Ovary (tissue), 10 donors: ENCODE measurements at regions of chr9 and their contacts with region 1.

Region 1: DNA sequence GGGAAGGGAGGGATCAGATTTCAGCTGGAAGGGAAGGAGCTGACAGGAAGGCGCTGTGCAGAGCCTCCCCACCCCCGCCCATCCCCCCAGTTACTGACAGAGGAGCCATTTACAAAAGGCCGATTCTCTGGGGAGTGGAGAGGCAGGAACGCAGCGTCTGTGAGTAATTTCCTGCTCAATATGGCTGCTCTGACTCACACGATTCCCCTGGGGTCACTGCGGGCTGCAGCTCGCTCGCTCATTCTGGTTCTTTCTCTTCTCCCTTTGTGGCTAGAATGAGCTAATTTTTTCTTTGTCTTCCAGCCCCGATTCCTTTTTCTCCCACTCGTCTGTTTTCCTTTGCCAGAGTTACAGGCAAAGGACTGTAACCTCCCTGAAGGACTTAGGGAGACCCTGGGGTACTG is 28.8 kb downstream of the PTPA start:
- DNase-seq: peak; percentile 86 to 95 (median 91)
- H3K4me3 ChIP-seq: peak overlapping the region; percentile 29
- H3K27ac ChIP-seq: peak overlapping the region; percentile 97 to 98
- H3K4me1 ChIP-seq: peaks cover 46% of the 10 kb centered on the region
- H3K27me3 ChIP-seq: no peaks in the 10 kb centered on the region
- CTCF ChIP-seq: no peak
- EP300 ChIP-seq: peak; percentile 76
- POLR2A ChIP-seq: no peak

Region 2: DNA sequence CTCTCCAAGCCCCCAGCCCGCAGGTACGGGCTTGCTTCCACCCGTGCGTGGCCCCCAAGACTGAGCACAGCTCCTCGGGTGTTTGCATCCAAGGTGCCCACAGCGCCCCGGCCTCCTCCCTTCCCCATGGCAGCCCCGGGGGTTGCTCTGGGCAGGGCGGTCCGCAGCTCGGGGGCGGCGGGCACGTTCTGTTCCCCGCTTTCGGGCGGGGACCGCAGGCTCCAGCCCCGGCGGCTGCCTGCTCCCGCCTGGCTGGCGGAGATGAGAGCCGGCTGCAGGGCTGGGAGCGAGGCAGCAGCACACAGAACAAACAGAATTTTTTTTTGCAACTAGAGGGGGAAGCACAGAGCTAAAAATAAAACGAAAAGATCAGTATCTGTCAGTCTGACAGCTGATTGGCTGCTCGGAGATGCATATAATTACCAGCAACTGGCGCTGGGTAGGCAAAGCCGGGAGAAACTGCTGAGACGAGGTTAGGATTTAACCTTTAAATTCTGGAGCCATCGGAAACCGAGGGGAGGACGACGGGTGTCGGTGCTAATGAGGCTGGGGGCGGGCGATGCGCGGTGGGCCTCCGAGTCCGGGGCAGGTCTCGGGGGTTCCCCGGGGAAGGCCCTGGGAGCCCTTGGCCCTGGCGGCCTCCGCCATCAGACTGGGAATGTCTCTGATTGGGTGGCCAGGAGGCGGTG is 180.7 kb after region 1 on chr9:
- intact Hi-C with region 1: loop called in 1 of 4 experiments (anchors 10 kb)
- DNase-seq: peak; percentile 62 to 84 (median 64)
- H3K4me3 ChIP-seq: peak overlapping the region; percentile 34
- H3K27ac ChIP-seq: peak overlapping the region; percentile 88 to 94
- H3K4me1 ChIP-seq: peaks cover 35% of the 10 kb centered on the region
- H3K27me3 ChIP-seq: no peaks in the 10 kb centered on the region
- CTCF ChIP-seq: peak in 1 of 3 donors; percentile 26
- EP300 ChIP-seq: no peak
- POLR2A ChIP-seq: no peak

Region 3: DNA sequence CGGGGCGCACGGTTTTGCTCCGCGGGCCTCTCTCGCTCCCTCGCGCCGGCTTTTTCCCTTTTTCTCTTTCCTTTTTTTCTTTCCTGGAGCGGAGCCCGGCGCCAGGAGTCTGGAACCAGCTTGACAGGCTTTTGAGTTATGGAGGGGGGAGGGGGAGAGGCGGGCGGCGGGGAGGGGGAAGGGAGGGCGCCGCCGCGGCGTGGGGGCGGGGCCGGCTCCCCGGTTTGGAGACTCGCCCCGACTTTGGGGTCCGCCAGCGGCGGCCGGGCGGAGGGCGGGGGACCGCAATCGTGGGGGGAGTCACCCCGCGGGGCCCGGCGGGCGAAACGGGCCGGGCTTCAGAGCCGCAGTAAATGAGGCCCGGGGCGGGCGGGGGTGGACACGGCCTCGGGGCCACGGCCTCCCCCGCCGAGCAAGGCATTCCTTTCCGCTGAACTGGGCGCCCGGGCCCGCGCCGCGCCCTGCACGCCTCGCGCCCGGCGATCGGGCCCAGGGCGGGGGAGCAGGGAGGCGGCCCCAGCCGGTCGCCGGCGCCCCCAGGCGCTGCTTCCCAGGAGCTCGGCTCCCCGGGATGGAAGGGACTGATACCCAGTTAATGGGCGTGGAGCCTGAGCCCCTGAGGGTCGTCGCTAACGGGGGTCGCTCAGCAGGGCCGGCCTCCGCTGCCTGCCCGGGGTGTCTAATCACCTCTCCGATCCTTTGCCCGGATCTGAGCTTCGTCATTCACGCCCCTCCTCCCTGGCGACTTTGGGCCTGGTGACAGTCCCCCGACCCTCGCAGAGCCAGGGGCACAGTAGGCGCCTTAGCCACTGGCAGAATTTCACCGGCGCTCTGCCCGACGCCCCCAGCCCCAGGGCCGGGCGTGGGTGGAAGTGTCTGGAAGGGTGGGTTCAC is 342.8 kb after region 1 on chr9:
- intact Hi-C with region 1: loop called in 3 of 4 experiments (anchors 2 to 10 kb)
- DNase-seq: peak; percentile 92 to 98 (median 95)
- H3K4me3 ChIP-seq: peak overlapping the region; percentile 51
- H3K27ac ChIP-seq: peak overlapping the region; percentile 92 to 100
- H3K4me1 ChIP-seq: peaks cover 37% of the 10 kb centered on the region
- H3K27me3 ChIP-seq: no peaks in the 10 kb centered on the region
- CTCF ChIP-seq: peak in 1 of 3 donors; percentile 46
- EP300 ChIP-seq: no peak
- POLR2A ChIP-seq: peak; percentile 51

Region 4: DNA sequence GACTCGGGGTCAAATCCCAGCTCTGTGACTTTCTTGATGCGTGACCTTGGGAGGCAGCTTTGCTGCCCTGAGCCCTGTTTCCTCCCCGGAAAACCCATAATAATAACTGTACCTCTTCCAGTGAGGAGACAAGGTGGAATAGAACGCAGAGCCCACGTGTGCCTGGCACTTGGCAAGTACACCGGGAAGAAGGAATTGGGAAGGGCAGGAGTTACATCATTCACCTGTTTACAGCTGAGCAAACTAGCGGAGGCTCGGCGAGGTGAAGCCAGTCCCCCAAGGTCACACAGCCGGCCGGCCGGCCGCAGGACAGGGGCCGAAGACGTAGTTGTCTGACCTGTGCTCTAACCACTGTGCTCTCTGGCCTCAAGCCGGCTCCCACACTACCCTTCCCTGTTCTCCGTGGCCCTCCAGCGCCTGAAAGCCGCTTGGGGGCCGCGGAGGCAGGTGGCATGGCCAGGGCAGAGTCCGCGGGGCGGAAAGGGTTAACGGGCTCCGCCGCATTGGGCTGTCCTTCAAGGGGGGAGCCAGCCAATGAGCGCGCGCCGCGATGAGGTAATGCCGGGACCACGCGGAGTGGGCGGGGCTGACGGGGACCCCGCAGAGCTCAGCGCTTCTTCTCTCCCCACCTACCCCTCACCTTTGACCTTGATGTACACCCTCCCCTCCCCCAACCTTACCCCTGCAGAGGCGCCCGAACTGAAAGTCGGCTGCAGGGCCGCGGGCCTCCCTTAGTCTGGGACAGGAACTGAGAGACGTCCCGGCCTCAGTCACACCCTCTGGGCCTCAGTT is 355.7 kb after region 1 on chr9:
- intact Hi-C with region 1: loop called in 1 of 4 experiments (anchors 10 kb)
- DNase-seq: peak; percentile 95 to 98 (median 96)
- H3K4me3 ChIP-seq: peak overlapping the region; percentile 55
- H3K27ac ChIP-seq: peak overlapping the region; percentile 96 to 98
- H3K4me1 ChIP-seq: peaks cover 25% of the 10 kb centered on the region
- H3K27me3 ChIP-seq: no peaks in the 10 kb centered on the region
- CTCF ChIP-seq: no peak
- EP300 ChIP-seq: peak; percentile 49
- POLR2A ChIP-seq: peak; percentile 16

Region 5: DNA sequence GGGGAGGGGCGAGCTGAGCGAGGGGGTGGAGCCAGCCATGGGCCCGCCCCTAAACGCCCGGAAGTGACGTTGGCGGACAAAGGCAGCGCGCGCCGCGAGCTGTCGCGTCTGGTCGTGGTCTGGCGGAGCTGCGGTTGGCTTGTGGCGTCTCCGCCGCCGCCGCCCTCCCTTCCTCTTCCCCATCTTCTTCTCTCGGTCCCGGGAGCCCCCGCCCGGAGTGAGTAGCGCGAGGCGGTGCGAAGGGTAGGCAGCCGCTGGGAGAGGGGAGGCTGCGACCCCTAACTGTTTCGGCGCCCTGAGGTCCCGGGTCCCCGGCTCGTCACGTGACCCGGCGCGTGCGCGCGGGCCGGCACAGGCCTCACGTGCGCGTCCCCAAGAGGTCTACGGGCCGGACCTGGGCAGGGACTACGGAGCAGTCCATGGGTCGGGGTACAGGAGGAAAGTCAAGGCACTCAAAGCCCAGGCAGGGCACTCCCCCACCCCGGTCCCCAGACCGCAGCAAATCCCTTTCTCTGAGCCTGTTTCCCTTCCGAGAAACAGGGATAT is 486.2 kb after region 1 on chr9 and contains the start of gene NTMT1:
- intact Hi-C with region 1: loop called in 1 of 4 experiments (anchors 5 kb)
- DNase-seq: peak; percentile 83 to 94 (median 92)
- H3K4me3 ChIP-seq: peak within 1 kb of the TSS; percentile 63
- H3K27ac ChIP-seq: peak within 1 kb of the TSS; percentile 50 to 84
- H3K4me1 ChIP-seq: peaks cover 12% of the 10 kb centered on the region
- H3K27me3 ChIP-seq: no peaks in the 10 kb centered on the region
- CTCF ChIP-seq: peak in 2 of 3 donors; percentile 14 to 38
- EP300 ChIP-seq: no peak
- POLR2A ChIP-seq: peak; percentile 99
- total RNA-seq, gene NTMT1: 11.9 to 29.7 (median 25.3) TPM